Activated B cell treated with CpG ODN at 0.5 μM for 24 hours (primary cell): ENCODE measurements at regions of chr20 and their contacts with region 1.

Region 1: DNA sequence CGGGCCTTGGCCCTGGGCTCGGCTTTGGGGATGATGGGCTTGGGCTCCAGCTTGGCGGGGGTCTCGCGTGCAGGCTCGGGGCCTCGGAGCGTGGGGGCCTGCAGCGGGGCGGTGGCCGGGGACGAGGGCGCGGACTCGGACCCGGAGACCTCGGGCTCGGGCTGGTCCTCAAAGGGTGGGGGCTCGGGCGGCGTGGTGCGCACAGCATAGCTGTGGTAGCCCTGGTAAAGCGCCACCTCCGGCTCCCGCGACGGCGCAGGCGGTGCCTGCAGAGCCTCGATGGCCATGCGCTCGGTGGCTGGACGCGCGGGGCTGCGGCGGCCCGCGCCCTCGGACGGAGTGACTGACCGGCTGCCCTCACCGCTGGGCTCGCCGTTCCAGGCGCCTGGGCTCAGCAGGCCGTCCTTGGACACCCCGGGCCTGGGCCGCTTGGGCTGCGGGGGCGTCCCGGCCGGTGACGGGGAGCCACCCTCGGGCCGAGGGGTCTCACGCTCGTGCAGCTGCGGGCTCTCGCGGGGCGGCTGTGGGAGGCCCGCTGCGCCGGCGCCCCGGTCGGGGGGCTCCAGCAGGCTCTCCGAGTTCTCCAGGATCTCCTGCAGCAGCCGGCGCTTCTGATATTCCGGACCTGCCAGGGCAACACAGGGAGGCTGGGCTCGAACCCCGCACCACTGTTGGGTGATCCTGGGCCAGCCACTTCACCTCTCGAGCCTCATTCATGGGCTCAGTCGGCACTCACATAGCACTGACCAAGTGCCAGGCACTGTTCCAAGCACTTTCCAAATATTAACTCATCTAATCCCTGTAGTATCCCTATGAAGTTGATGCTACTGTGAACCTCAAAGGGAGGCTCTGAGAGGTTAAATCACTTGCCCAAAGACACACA is 71.0 kb downstream of the JPH2 start:
- DNase-seq: no peak
- ATAC-seq: no peak
- H3K4me3 Mint-ChIP-seq: no peak overlapping the region
- H3K27ac Mint-ChIP-seq: no peak overlapping the region
- H3K4me1 Mint-ChIP-seq: no peaks in the 10 kb centered on the region
- H3K27me3 Mint-ChIP-seq: peaks cover 46% of the 10 kb centered on the region
- CTCF ChIP-seq: no peak

Region 2: DNA sequence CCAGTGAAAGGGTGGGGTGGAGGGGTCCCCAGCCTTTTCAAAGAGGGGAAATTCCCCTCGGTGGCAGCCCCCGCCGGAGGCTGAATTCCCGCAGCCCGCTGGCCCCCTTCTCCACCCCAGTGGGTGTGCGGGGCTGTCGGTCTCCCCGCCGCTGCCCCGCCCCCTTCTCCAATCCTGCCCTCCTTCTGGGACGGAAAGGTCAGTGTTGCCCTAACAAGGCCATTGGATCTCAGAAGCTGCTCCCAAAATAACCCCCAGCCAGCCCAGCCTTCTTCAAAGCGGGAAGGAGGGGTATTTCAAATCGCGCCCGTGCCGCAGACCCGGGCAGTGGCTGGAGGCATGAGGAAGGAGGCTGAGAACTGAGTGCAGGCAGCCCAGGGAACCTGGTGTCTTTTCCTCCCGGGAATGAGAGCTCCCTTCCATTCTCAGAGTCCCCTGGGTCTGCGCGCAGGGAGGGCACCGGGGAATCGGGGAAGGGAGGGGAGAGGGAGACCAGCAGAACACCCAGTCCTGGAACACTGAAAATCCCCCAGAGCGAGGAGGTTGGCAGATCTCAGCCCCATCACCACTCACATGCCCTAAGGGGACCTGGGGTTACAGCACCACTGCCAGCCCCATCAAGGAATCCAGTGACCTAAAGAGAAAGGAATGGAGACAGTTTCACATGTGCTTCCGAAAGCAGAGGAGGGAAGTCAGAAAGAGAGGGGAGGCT is 71.2 kb after region 1 on chr20 and contains the start of gene JPH2:
- CTCF ChIA-PET with region 1: interaction called, 62 read pairs
- POLR2A ChIA-PET with region 1: interaction called, 5 read pairs
- intact Hi-C with region 1: loop called (anchors 1 kb)
- DNase-seq: no peak
- ATAC-seq: peak; percentile 16
- H3K4me3 Mint-ChIP-seq: peak within 1 kb of the TSS; percentile 64
- H3K27ac Mint-ChIP-seq: no peak within 1 kb of the TSS
- H3K4me1 Mint-ChIP-seq: peaks cover 21% of the 10 kb centered on the region
- H3K27me3 Mint-ChIP-seq: peaks cover 41% of the 10 kb centered on the region
- CTCF ChIP-seq: no peak
- total RNA-seq, gene JPH2: not detected in 2 replicates

Region 3: DNA sequence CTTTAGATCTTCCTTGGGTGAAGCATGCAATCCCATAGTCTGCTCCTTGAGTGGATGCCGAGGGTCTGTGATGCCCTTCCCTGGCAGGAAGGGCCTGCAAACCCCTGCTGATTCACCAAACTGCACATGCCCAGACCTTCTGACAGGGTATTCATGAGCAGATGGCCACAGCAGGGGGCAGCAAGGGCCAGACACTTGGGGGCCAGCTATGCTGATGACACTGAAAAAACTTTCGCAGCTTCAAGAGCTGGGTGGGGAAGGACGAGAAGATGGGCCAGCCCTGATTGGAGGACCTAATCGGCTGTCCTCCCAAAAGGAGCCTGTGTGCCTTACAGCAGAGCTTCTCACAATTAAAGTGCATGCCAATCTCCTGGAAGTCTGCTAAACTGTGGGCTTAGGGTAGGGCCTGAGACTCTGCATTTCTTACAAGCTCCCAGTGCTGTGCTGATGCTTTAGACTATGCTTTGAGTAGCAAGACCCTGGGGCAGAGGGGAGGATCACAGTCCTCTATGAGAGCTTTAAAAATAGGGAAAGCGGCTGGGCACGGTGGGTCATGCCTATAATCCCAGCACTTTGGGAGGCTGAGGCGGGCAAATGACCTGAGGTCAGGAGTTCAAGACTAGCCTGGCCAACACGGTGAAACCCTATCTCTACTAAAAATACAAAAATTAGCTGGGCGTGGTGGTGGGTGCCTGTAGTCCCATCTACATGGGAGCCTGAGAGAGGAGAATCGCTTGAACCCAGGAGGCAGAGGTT is 115.9 kb after region 1 on chr20:
- CTCF ChIA-PET with region 1: no interaction called
- POLR2A ChIA-PET with region 1: no interaction called
- intact Hi-C with region 1: no loop called
- DNase-seq: no peak
- ATAC-seq: no peak
- H3K4me3 Mint-ChIP-seq: no peak overlapping the region
- H3K27ac Mint-ChIP-seq: no peak overlapping the region
- H3K4me1 Mint-ChIP-seq: no peaks in the 10 kb centered on the region
- H3K27me3 Mint-ChIP-seq: no peaks in the 10 kb centered on the region
- CTCF ChIP-seq: no peak

Region 4: DNA sequence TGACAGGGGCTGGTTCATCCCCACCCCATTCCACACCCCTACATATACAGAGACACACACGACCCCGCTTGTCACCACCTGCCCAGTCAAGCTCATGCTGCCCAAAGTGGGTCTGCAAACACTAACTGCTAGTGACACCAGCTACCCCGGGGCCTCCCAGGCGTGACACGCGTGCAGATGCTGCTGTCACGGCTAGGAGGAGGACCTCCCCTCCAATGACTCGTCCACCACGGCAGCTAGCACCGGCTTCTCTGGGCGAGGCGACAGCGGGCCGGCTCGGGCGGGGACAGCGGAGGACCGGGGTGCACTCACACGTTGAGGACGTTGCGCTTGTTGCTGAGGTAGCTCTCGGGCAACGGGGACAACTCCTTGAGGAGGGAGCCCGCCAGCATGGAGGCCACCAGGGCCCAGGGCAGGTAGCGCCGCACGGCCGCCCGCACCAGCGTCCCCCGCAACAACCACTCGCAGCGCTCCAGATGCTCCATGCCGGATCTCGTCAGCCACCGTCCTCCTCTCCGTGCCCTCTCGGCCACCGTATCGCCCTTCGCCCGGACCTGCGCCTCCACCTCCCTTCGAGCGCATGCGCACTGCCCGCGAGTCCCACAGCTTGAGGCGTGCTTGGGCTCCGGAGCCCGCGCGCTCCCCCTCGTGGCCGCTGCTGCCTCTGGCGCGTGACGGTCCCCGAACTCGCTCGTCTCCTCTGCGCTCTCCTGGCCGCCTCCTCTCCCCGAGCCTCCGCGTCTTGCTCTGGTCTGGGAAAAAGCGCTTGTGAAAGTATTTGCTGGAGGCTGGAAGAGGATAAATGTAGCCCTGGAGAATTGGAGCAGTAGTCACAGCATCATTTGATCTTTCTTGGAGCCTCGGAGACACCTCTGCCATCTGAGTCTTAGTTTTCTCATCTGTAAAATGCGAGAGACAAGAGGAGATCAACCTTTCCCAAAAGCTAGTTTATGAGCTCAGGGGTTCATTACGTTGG is 194.9 kb after region 1 on chr20 and contains the start of gene FITM2:
- CTCF ChIA-PET with region 1: interaction called, 20 read pairs
- POLR2A ChIA-PET with region 1: no interaction called
- intact Hi-C with region 1: loop called (anchors 1 kb)
- DNase-seq: peak; percentile 99
- ATAC-seq: peak; percentile 97
- H3K4me3 Mint-ChIP-seq: peak within 1 kb of the TSS; percentile 91
- H3K27ac Mint-ChIP-seq: peak within 1 kb of the TSS; percentile 85
- H3K4me1 Mint-ChIP-seq: peaks cover 19% of the 10 kb centered on the region
- H3K27me3 Mint-ChIP-seq: peaks cover 3% of the 10 kb centered on the region
- CTCF ChIP-seq: no peak
- total RNA-seq, gene FITM2: 2.4 and 3.3 TPM in 2 replicates

Region 5: DNA sequence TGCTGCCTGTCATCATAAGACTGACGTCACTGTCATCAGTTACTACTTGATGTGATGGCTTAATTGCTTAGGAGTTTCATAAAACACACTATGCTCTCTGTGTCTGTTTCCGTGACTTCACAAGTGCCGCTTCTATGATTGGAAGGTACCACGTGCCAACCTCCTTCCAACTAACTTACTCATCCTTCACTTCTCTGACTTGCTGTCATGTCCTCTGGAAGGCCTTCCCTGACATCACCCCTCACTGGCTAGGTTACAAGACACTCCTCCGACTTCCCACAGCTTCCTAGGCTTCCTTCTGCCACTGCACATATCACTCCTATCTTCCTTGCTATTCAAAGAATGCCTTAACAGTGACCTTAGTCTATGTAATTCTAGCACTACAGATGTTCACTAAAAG is 385.4 kb after region 1 on chr20:
- CTCF ChIA-PET with region 1: no interaction called
- POLR2A ChIA-PET with region 1: no interaction called
- intact Hi-C with region 1: no loop called
- DNase-seq: no peak
- ATAC-seq: no peak
- H3K4me3 Mint-ChIP-seq: no peak overlapping the region
- H3K27ac Mint-ChIP-seq: no peak overlapping the region
- H3K4me1 Mint-ChIP-seq: peaks cover 17% of the 10 kb centered on the region
- H3K27me3 Mint-ChIP-seq: no peaks in the 10 kb centered on the region
- CTCF ChIP-seq: no peak